PC-9 (cell line): ENCODE measurements at regions of chr12 and their contacts with region 1.

Region 1: DNA sequence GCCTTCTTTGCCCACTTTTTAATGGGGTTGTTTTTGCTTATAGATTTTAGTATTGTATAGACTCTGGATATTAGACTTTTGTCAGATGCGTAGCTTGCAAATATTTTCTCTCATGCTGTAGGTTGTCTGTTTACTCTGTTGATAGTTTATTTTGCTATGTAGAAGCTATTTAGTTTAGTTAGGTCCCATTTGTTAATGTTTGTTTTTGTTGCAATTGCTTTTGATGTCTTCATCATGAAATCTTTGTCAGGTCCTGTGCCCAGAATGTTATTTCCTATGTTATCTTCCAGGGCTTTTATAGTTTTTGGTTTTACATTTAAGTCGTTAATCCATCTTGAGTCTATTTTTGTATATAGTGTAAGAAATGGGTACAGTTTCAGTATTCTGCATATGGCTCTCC is 30.0 kb upstream of the LYZ start:
- DNase-seq: no peak
- H3K4me3 ChIP-seq: no peak overlapping the region
- H3K27ac ChIP-seq: no peak overlapping the region
- H3K4me1 ChIP-seq: no peaks in the 10 kb centered on the region
- H3K27me3 ChIP-seq: no peaks in the 10 kb centered on the region; the same call in 1 of the 2 replicates
- CTCF ChIP-seq: no peak

Region 2: GRCh38 chr12:69359531-69360347 is 41.5 kb after region 1 on chr12 and contains the start of gene YEATS4:
- CTCF ChIA-PET with region 1: no interaction called
- POLR2A ChIA-PET with region 1: no interaction called
- intact Hi-C with region 1: no loop called
- DNase-seq: peak; percentile 87 to 88
- H3K4me3 ChIP-seq: peak within 1 kb of the TSS; percentile 63
- H3K27ac ChIP-seq: peak within 1 kb of the TSS; percentile 82
- H3K4me1 ChIP-seq: peaks cover 16% of the 10 kb centered on the region
- H3K27me3 ChIP-seq: no peaks in the 10 kb centered on the region
- CTCF ChIP-seq: no peak
- total RNA-seq, gene YEATS4: 23.5 and 30.5 TPM in 2 replicates

Region 3: GRCh38 chr12:69415471-69416275 is 97.4 kb after region 1 on chr12:
- CTCF ChIA-PET with region 1: interaction called, 22 read pairs
- POLR2A ChIA-PET with region 1: no interaction called
- intact Hi-C with region 1: no loop called
- DNase-seq: peak in 1 of 2 experiments; percentile 15
- H3K4me3 ChIP-seq: no peak overlapping the region
- H3K27ac ChIP-seq: no peak overlapping the region
- H3K4me1 ChIP-seq: no peaks in the 10 kb centered on the region
- H3K27me3 ChIP-seq: no peaks in the 10 kb centered on the region
- CTCF ChIP-seq: peak; percentile 67

Region 4: GRCh38 chr12:69570545-69571399 is 252.5 kb after region 1 on chr12:
- CTCF ChIA-PET with region 1: no interaction called
- POLR2A ChIA-PET with region 1: no interaction called
- intact Hi-C with region 1: no loop called
- DNase-seq: peak; percentile 47 to 55
- H3K4me3 ChIP-seq: no peak overlapping the region
- H3K27ac ChIP-seq: no peak overlapping the region
- H3K4me1 ChIP-seq: no peaks in the 10 kb centered on the region
- H3K27me3 ChIP-seq: no peaks in the 10 kb centered on the region
- CTCF ChIP-seq: peak; percentile 89